Mammary epithelial cell (primary cell): ENCODE measurements at regions of chr1 and their contacts with region 1.

Region 1: DNA sequence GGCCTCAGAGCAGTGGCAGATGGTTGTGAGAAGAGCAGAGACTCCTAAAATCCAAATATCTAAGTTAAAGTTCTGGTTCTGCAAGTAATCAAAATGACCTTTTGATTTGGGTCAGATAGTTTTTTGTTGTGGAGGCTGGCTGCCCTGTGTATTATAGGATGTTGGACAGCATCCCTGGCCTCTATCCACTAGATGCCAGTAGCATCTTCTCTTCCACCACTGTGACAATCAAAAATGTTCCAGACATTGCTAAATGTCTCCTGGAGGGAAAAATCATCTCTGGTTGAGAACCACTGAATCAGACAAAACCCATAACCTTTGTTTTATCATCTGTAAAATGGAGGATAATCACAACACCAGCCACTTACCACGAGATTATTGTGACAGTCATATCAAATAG is 5.9 kb upstream of the DPT start:
- DNase-seq: no peak
- H3K4me3 ChIP-seq: no peak overlapping the region
- H3K27ac ChIP-seq: no peak overlapping the region
- H3K4me1 ChIP-seq: no peaks in the 10 kb centered on the region
- H3K27me3 ChIP-seq: no peaks in the 10 kb centered on the region
- CTCF ChIP-seq: peak in 1 of 2 donors; percentile 45

Region 2: GRCh38 chr1:168504064-168504837 is 230.7 kb before region 1 on chr1:
- CTCF ChIA-PET with region 1: no interaction called
- dilution Hi-C with region 1: no loop called
- in situ Hi-C with region 1: no loop called
- intact Hi-C with region 1: no loop called
- DNase-seq: peak; percentile 70
- H3K4me3 ChIP-seq: no peak overlapping the region
- H3K27ac ChIP-seq: no peak overlapping the region
- H3K4me1 ChIP-seq: peaks cover 29% of the 10 kb centered on the region
- H3K27me3 ChIP-seq: no peaks in the 10 kb centered on the region
- CTCF ChIP-seq: no peak

Region 3: GRCh38 chr1:168636642-168637111 is 98.3 kb before region 1 on chr1:
- CTCF ChIA-PET with region 1: no interaction called
- dilution Hi-C with region 1: no loop called
- in situ Hi-C with region 1: no loop called
- intact Hi-C with region 1: no loop called
- DNase-seq: peak; percentile 93
- H3K4me3 ChIP-seq: no peak overlapping the region
- H3K27ac ChIP-seq: peak overlapping the region; percentile 95
- H3K4me1 ChIP-seq: peaks cover 26% of the 10 kb centered on the region
- H3K27me3 ChIP-seq: no peaks in the 10 kb centered on the region
- CTCF ChIP-seq: no peak

Region 4: GRCh38 chr1:168673974-168674683 is 60.8 kb before region 1 on chr1:
- CTCF ChIA-PET with region 1: no interaction called
- dilution Hi-C with region 1: no loop called
- in situ Hi-C with region 1: no loop called
- intact Hi-C with region 1: no loop called
- DNase-seq: no peak
- H3K4me3 ChIP-seq: no peak overlapping the region
- H3K27ac ChIP-seq: no peak overlapping the region
- H3K4me1 ChIP-seq: peaks cover 11% of the 10 kb centered on the region
- H3K27me3 ChIP-seq: no peaks in the 10 kb centered on the region
- CTCF ChIP-seq: no peak

Region 5: GRCh38 chr1:168774241-168774640 is 39.3 kb after region 1 on chr1:
- CTCF ChIA-PET with region 1: no interaction called
- dilution Hi-C with region 1: loop called (anchors 5 kb)
- in situ Hi-C with region 1: no loop called
- intact Hi-C with region 1: no loop called
- DNase-seq: no peak
- H3K4me3 ChIP-seq: no peak overlapping the region
- H3K27ac ChIP-seq: no peak overlapping the region
- H3K4me1 ChIP-seq: no peaks in the 10 kb centered on the region
- H3K27me3 ChIP-seq: no peaks in the 10 kb centered on the region
- CTCF ChIP-seq: no peak